PC-9 (cell line): ENCODE measurements at regions of chr3 and their contacts with region 1.

Region 1: GRCh38 chr3:168095611-168096209 is at the start of gene GOLIM4:
- DNase-seq: peak; percentile 91 to 99
- H3K4me3 ChIP-seq: peak within 1 kb of the TSS; percentile 92
- H3K27ac ChIP-seq: peak within 1 kb of the TSS; percentile 67
- H3K4me1 ChIP-seq: peaks cover 35% of the 10 kb centered on the region
- H3K27me3 ChIP-seq: no peaks in the 10 kb centered on the region
- CTCF ChIP-seq: 0 out of 2 replicates have a peak, but pooled peaks have one; percentile 18
- total RNA-seq, gene GOLIM4: 10.9 and 17.5 TPM in 2 replicates

Region 2: DNA sequence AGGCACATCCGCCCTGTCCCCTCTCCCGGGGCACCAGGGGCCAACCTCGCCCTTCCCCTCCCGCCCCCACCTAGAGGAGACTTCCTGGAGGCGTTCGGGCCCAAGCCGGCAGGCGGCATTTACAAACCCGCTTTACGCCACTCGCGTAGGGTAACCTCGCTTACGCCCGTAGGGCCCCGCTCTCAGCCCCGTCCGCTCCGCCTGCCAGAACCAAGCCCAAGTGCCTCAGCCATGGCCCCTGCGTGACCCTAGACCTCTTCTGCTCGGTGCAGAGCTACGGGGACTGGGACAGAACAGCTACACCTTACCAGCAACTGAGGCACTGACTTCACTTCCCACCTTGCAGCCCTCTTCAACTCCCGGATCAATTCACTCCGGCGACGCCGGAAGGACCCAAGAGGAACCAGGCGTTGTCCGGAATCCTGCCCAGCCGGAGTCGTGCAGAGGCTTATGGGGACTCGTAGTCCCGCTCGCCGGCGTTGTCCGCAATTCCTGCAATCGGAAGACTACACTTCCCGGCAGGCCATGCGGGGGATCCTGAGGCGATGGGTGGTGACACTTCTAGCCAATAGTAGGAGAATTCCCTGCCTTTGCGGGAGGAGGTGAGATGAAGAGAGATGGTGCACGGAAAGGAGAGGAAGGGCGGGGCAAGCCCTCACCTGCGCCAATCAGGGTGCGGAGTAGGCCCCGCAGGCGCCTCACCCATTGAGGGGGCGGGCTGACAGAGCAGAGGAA is 361.0 kb before region 1 on chr3 and contains the start of gene PDCD10:
- CTCF ChIA-PET with region 1: no interaction called
- POLR2A ChIA-PET with region 1: no interaction called
- intact Hi-C with region 1: loop called (anchors 1 kb)
- DNase-seq: peak; percentile 99
- H3K4me3 ChIP-seq: peak within 1 kb of the TSS; percentile 87
- H3K27ac ChIP-seq: peak within 1 kb of the TSS; percentile 70
- H3K4me1 ChIP-seq: peaks cover 29% of the 10 kb centered on the region
- H3K27me3 ChIP-seq: no peaks in the 10 kb centered on the region
- CTCF ChIP-seq: no peak
- total RNA-seq, gene PDCD10: 79.5 and 84.6 TPM in 2 replicates

Region 3: GRCh38 chr3:168071591-168072322 is 24.0 kb before region 1 on chr3:
- CTCF ChIA-PET with region 1: no interaction called
- POLR2A ChIA-PET with region 1: interaction called, 3 read pairs
- intact Hi-C with region 1: loop called (anchors 1 kb)
- DNase-seq: peak; percentile 37 to 75
- H3K4me3 ChIP-seq: no peak overlapping the region
- H3K27ac ChIP-seq: 0 out of 2 replicates have a peak overlapping the region, but pooled peaks have one; percentile 18
- H3K4me1 ChIP-seq: peaks cover 12% of the 10 kb centered on the region
- H3K27me3 ChIP-seq: no peaks in the 10 kb centered on the region
- CTCF ChIP-seq: no peak

Region 4: GRCh38 chr3:168116279-168116678 is 20.6 kb after region 1 on chr3:
- CTCF ChIA-PET with region 1: no interaction called
- POLR2A ChIA-PET with region 1: no interaction called
- intact Hi-C with region 1: no loop called
- DNase-seq: no peak
- H3K4me3 ChIP-seq: no peak overlapping the region
- H3K27ac ChIP-seq: no peak overlapping the region
- H3K4me1 ChIP-seq: no peaks in the 10 kb centered on the region; the same call in 1 of the 2 replicates
- H3K27me3 ChIP-seq: no peaks in the 10 kb centered on the region
- CTCF ChIP-seq: no peak

Region 5: GRCh38 chr3:168165390-168166269 is 69.9 kb after region 1 on chr3:
- CTCF ChIA-PET with region 1: no interaction called
- POLR2A ChIA-PET with region 1: no interaction called
- intact Hi-C with region 1: loop called (anchors 1 kb)
- DNase-seq: peak; percentile 36 to 46
- H3K4me3 ChIP-seq: no peak overlapping the region
- H3K27ac ChIP-seq: no peak overlapping the region
- H3K4me1 ChIP-seq: no peaks in the 10 kb centered on the region
- H3K27me3 ChIP-seq: no peaks in the 10 kb centered on the region
- CTCF ChIP-seq: peak; percentile 87

Region 6: DNA sequence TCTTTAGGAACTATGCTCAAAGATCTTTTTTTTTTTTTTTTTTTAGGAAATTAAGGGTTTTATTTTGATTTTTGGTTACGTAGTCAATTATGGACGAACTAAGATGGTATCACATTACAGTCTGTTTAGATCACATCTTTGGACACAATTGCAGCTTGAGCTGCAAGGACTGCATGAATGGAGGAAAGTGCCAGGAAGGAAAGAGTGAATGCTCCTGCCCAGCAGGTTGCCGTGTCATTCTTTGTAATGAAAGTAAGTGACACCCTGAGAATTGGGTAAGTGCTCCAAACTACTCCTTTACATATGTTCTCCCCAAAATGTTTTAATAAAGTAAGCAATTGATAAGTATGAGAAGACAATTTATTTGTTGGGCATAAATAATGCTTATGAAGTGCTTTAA is 716.5 kb after region 1 on chr3:
- CTCF ChIA-PET with region 1: interaction called, 11 read pairs
- POLR2A ChIA-PET with region 1: no interaction called
- intact Hi-C with region 1: no loop called
- DNase-seq: peak in 1 of 2 experiments; percentile 31
- H3K4me3 ChIP-seq: no peak overlapping the region
- H3K27ac ChIP-seq: no peak overlapping the region
- H3K4me1 ChIP-seq: no peaks in the 10 kb centered on the region
- H3K27me3 ChIP-seq: no peaks in the 10 kb centered on the region
- CTCF ChIP-seq: no peak